CD8-positive, alpha-beta T cell (primary cell): ENCODE measurements at regions of chr7 and their contacts with region 1.

Region 1: GRCh38 chr7:47088329-47089067 is 493.4 kb downstream of the TNS3 start:
- DNase-seq: peak in 3 of 9 experiments; percentile 10 to 45 (median 36)
- ATAC-seq: no peak
- H3K4me3 ChIP-seq: no peak overlapping the region
- H3K4me3 Mint-ChIP-seq: no peak overlapping the region
- H3K27ac ChIP-seq: no peak overlapping the region
- H3K27ac Mint-ChIP-seq: no peak overlapping the region
- H3K4me1 ChIP-seq: no peaks in the 10 kb centered on the region
- H3K4me1 Mint-ChIP-seq: no peaks in the 10 kb centered on the region
- H3K27me3 ChIP-seq: no peaks in the 10 kb centered on the region
- H3K27me3 Mint-ChIP-seq: peaks cover 8% of the 10 kb centered on the region
- CTCF ChIP-seq: peak; percentile 49

Region 2: DNA sequence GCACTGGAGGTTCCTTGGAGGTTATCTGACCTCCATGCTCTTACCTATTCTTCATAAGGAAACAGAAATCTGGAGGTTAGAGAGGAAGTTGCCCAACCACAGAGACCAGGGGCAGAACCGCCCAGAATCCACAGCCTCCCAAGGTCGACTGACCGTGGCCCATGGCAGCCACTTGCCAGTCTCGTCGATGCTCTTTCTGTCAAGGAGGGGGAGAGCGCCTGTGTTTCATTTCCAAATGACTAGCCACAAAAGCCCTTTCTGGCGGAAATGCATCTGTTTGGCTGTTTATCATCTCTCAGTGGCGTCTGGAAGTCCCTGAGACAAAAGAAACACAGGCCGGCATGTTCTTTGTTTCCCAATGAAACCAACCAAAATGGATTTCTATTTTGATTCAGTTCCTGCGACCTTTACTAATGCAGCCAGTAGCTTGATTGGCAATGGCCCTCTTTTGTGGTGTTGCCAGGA is 1928.0 kb before region 1 on chr7:
- CTCF ChIA-PET with region 1: no interaction called
- POLR2A ChIA-PET with region 1: no interaction called
- intact Hi-C with region 1: loop called in 1 of 2 experiments (anchors 5 kb)
- DNase-seq: no peak
- ATAC-seq: no peak
- H3K4me3 ChIP-seq: no peak overlapping the region
- H3K4me3 Mint-ChIP-seq: no peak overlapping the region
- H3K27ac ChIP-seq: no peak overlapping the region
- H3K27ac Mint-ChIP-seq: no peak overlapping the region
- H3K4me1 ChIP-seq: no peaks in the 10 kb centered on the region
- H3K4me1 Mint-ChIP-seq: peaks cover 8% of the 10 kb centered on the region
- H3K27me3 ChIP-seq: peaks cover 4 to 7% of the 10 kb centered on the region in 2 experiments
- H3K27me3 Mint-ChIP-seq: peaks cover 21% of the 10 kb centered on the region
- CTCF ChIP-seq: no peak

Region 3: GRCh38 chr7:45890902-45891461 is 1197.5 kb before region 1 on chr7:
- CTCF ChIA-PET with region 1: no interaction called
- POLR2A ChIA-PET with region 1: no interaction called
- intact Hi-C with region 1: loop called in 1 of 2 experiments (anchors 1 kb)
- DNase-seq: peak in 2 of 9 experiments; percentile 27 to 33
- ATAC-seq: no peak
- H3K4me3 ChIP-seq: no peak overlapping the region
- H3K4me3 Mint-ChIP-seq: no peak overlapping the region
- H3K27ac ChIP-seq: no peak overlapping the region
- H3K27ac Mint-ChIP-seq: no peak overlapping the region
- H3K4me1 ChIP-seq: no peaks in the 10 kb centered on the region
- H3K4me1 Mint-ChIP-seq: peaks cover 3% of the 10 kb centered on the region
- H3K27me3 ChIP-seq: peaks cover 3 to 10% of the 10 kb centered on the region in 2 experiments
- H3K27me3 Mint-ChIP-seq: peaks cover 56% of the 10 kb centered on the region
- CTCF ChIP-seq: peak; percentile 63

Region 4: GRCh38 chr7:45917658-45918057 is 1170.8 kb before region 1 on chr7:
- CTCF ChIA-PET with region 1: interaction called, 5 read pairs
- POLR2A ChIA-PET with region 1: no interaction called
- intact Hi-C with region 1: loop called in 1 of 2 experiments (anchors 1 kb)
- DNase-seq: peak; percentile 34 to 84 (median 69)
- ATAC-seq: peak; percentile 44
- H3K4me3 ChIP-seq: no peak overlapping the region
- H3K4me3 Mint-ChIP-seq: no peak overlapping the region
- H3K27ac ChIP-seq: no peak overlapping the region
- H3K27ac Mint-ChIP-seq: no peak overlapping the region
- H3K4me1 ChIP-seq: peaks cover 29% of the 10 kb centered on the region
- H3K4me1 Mint-ChIP-seq: peaks cover 13% of the 10 kb centered on the region
- H3K27me3 ChIP-seq: peaks cover 0 to 5% of the 10 kb centered on the region in 2 experiments
- H3K27me3 Mint-ChIP-seq: peaks cover 57% of the 10 kb centered on the region
- CTCF ChIP-seq: peak; percentile 77

Region 5: GRCh38 chr7:46993396-46993795 is 95.1 kb before region 1 on chr7:
- CTCF ChIA-PET with region 1: no interaction called
- POLR2A ChIA-PET with region 1: no interaction called
- intact Hi-C with region 1: no loop called
- DNase-seq: no peak
- ATAC-seq: no peak
- H3K4me3 ChIP-seq: no peak overlapping the region
- H3K4me3 Mint-ChIP-seq: no peak overlapping the region
- H3K27ac ChIP-seq: no peak overlapping the region
- H3K27ac Mint-ChIP-seq: no peak overlapping the region
- H3K4me1 ChIP-seq: no peaks in the 10 kb centered on the region
- H3K4me1 Mint-ChIP-seq: no peaks in the 10 kb centered on the region
- H3K27me3 ChIP-seq: no peaks in the 10 kb centered on the region
- H3K27me3 Mint-ChIP-seq: no peaks in the 10 kb centered on the region
- CTCF ChIP-seq: no peak

Region 6: DNA sequence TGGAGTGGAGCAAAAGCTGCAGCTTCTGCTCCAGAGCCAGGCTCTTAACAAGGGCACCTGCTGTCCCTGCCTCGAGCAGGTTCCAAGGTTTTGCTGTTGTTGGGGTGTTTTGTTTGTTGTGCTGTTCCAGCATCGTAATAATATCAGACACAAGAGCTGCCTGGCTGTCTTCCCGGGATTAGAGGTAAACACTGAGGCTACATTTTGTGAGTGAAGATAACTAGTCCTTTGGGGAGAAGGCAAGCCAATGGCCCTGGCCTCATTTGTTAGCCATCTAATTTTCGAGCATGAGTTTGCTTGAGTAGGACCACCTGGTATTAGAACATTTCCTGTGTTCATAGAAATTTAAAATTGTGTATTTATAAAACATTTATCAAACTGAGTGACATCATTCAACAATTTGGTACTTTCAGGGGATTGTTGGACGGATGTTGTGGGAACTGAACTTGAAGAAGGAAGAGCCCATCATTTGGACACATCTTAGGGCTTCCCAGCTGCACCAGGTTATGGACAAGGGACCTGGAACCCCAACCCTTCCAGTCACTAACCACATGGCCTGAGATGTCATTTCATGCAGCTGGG is 61.6 kb before region 1 on chr7:
- CTCF ChIA-PET with region 1: no interaction called
- POLR2A ChIA-PET with region 1: no interaction called
- intact Hi-C with region 1: no loop called
- DNase-seq: no peak
- ATAC-seq: no peak
- H3K4me3 ChIP-seq: no peak overlapping the region
- H3K4me3 Mint-ChIP-seq: no peak overlapping the region
- H3K27ac ChIP-seq: no peak overlapping the region
- H3K27ac Mint-ChIP-seq: no peak overlapping the region
- H3K4me1 ChIP-seq: no peaks in the 10 kb centered on the region
- H3K4me1 Mint-ChIP-seq: no peaks in the 10 kb centered on the region
- H3K27me3 ChIP-seq: no peaks in the 10 kb centered on the region
- H3K27me3 Mint-ChIP-seq: no peaks in the 10 kb centered on the region
- CTCF ChIP-seq: no peak

Region 7: DNA sequence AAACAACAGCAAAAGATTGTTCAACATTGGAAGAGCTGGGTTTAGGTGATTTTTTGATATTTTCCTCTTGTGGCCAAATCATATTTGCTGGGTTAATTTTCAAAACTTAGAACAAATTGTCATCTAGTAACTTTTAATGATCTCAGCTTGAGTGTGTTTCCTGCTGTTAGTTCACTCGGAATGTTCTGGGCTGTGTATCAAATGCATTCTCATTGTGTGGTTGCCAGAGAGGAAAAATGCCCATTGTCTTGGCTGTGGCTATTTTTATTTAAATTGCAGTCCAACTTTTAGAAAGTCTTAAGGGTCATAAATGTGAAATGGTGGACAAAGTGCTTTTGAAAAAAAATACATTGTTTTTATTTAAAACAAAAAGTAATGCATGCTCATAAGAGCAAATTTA is 48.6 kb before region 1 on chr7:
- CTCF ChIA-PET with region 1: no interaction called
- POLR2A ChIA-PET with region 1: no interaction called
- intact Hi-C with region 1: loop called in 1 of 2 experiments (anchors 5 kb)
- DNase-seq: no peak
- ATAC-seq: no peak
- H3K4me3 ChIP-seq: no peak overlapping the region
- H3K4me3 Mint-ChIP-seq: no peak overlapping the region
- H3K27ac ChIP-seq: no peak overlapping the region
- H3K27ac Mint-ChIP-seq: no peak overlapping the region
- H3K4me1 ChIP-seq: no peaks in the 10 kb centered on the region
- H3K4me1 Mint-ChIP-seq: no peaks in the 10 kb centered on the region
- H3K27me3 ChIP-seq: no peaks in the 10 kb centered on the region
- H3K27me3 Mint-ChIP-seq: no peaks in the 10 kb centered on the region
- CTCF ChIP-seq: no peak